Activated naive CD4-positive, alpha-beta T cell treated with anti-CD3 and anti-CD28 coated beads for 36 hours (primary cell): ENCODE measurements at regions of chr2 and their contacts with region 1.

Region 1: DNA sequence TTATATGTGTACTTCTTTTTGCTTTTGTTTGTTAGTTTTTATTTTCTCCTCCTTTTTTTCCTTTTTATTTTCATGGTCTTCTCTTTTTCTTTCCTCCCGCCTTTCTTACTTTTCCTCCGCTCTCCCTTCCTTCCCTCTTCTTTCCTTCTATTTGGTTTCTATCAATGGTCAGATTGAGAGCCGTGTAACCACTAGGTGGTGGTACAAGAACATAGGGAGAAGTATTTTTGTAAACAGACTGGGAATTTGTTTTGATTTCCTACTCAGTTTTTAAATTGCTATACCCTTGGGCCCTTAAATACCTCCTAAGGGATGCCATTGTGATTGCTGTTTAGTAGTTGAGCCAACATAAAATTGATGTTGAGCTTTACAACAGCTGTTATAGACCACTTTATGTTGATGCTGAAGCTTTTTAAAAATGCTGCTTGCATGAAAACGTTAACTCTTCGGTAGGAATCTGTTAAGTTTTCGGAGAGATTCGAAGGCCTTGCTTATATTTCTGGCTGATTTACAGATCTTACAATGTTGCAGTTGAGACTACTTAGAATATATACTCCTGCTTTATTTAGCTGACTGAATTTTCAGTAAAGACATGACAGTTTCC is 124.2 kb downstream of the UBE2E3 start:
- DNase-seq: peak; percentile 35
- H3K4me3 Mint-ChIP-seq: peak overlapping the region; percentile 20
- H3K27ac Mint-ChIP-seq: peak overlapping the region; percentile 29
- H3K4me1 Mint-ChIP-seq: peaks cover 41% of the 10 kb centered on the region
- H3K27me3 Mint-ChIP-seq: no peaks in the 10 kb centered on the region

Region 2: DNA sequence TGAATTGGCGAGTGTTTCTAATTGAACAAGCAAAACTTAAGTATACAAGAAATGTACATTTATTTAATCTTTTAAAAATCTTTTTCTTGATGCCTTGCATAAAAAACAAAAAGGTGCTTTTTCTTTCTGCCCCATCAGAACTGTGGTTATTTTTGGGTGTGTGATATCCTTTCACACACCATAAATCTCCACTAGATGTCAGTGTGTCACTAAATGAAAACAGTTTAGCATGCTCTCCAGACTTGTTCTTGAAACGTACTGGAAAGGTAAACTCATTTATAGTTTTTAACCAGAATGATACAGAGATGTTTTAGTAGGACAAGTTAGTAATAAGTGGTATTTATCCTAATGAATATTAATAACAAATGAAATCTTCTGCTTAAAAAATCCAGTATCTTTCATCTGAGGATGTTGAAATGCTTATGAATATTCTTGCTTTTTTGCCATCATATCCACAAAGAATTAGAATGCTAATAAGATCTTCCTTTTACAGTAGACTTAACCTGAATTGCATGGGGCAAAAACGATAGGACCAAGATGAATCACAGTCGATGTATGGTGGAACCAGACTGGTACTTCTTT is 27.4 kb before region 1 on chr2:
- CTCF ChIA-PET with region 1: interaction called, 4 read pairs
- intact Hi-C with region 1: loop called (anchors 1 kb)
- DNase-seq: peak; percentile 8
- H3K4me3 Mint-ChIP-seq: no peak overlapping the region
- H3K27ac Mint-ChIP-seq: no peak overlapping the region
- H3K4me1 Mint-ChIP-seq: peaks cover 6% of the 10 kb centered on the region
- H3K27me3 Mint-ChIP-seq: no peaks in the 10 kb centered on the region

Region 3: DNA sequence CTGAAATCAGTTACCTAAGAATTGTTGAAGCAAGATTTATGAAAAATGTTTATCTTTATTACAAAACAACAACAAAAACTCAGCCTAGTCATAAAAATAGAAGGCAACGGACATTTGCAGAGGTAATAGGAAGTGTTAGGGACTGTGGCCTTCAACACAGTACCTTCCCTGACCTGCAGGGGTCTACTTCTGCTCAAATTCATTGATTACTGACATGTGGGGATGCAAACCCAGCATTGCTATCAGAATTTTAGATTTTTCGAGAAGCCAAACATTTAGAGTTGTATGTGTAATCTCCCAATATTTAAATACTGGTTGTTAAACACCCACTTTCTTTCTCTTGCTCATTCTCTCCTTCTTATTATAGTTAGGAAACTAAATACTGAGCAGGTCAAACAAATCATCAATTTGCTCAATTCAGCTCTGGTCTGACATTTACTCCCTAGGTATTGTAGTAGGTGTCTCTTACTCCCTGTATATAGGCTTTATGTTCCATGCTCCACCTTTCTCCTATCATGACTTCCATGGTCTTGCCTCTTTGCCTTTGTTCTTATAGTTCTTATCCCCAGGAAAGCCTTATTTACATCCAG is 74.3 kb after region 1 on chr2:
- CTCF ChIA-PET with region 1: no interaction called
- intact Hi-C with region 1: loop called (anchors 1 kb)
- DNase-seq: peak; percentile 61
- H3K4me3 Mint-ChIP-seq: no peak overlapping the region
- H3K27ac Mint-ChIP-seq: peak overlapping the region; percentile 5
- H3K4me1 Mint-ChIP-seq: peaks cover 48% of the 10 kb centered on the region
- H3K27me3 Mint-ChIP-seq: no peaks in the 10 kb centered on the region

Region 4: GRCh38 chr2:181281206-181281832 is 176.7 kb after region 1 on chr2:
- CTCF ChIA-PET with region 1: no interaction called
- intact Hi-C with region 1: loop called (anchors 2 kb)
- DNase-seq: no peak
- H3K4me3 Mint-ChIP-seq: no peak overlapping the region
- H3K27ac Mint-ChIP-seq: peak overlapping the region; percentile 60
- H3K4me1 Mint-ChIP-seq: peaks cover 37% of the 10 kb centered on the region
- H3K27me3 Mint-ChIP-seq: no peaks in the 10 kb centered on the region

Region 5: DNA sequence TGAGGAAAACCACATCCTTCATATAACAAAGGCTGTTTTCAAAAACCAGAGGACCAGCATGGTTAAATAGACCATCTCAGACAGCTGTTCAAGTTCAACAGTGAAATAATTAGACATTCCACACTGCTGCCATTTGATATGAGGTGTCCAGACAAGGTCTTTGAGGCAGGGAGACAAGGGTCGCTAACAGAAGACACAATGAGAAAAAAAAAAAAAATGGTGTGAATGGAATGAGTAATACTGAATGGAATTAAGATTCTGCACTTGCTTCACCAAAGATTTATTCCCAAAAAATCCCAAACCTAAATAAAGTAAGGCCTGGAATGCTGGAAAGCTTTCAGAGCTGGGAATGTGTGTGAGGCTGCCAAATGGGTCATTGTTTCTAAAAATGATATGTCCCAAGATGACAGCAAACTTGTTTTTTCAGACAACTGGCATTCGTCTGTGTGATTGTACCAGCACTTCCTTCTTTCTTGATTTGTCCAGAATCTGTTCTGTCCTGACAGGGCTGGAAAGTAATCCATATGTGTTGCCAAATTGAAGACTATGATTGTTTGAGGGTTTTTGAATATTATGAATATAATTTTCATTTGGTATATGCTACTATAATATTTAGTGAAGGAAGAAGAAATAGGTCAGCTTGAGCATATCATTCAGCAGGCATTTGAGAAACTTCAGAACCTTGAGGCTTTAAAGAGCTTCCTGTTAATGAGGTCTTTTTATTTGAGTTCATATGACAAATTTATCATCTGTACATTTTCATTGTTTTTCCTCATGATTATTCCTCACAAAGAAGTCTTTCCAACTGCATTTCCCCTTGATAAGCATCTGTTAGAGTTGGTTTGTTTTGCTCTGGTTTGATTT is 267.4 kb after region 1 on chr2:
- CTCF ChIA-PET with region 1: no interaction called
- intact Hi-C with region 1: no loop called
- DNase-seq: no peak
- H3K4me3 Mint-ChIP-seq: no peak overlapping the region
- H3K27ac Mint-ChIP-seq: no peak overlapping the region
- H3K4me1 Mint-ChIP-seq: peaks cover 17% of the 10 kb centered on the region
- H3K27me3 Mint-ChIP-seq: no peaks in the 10 kb centered on the region

Region 6: DNA sequence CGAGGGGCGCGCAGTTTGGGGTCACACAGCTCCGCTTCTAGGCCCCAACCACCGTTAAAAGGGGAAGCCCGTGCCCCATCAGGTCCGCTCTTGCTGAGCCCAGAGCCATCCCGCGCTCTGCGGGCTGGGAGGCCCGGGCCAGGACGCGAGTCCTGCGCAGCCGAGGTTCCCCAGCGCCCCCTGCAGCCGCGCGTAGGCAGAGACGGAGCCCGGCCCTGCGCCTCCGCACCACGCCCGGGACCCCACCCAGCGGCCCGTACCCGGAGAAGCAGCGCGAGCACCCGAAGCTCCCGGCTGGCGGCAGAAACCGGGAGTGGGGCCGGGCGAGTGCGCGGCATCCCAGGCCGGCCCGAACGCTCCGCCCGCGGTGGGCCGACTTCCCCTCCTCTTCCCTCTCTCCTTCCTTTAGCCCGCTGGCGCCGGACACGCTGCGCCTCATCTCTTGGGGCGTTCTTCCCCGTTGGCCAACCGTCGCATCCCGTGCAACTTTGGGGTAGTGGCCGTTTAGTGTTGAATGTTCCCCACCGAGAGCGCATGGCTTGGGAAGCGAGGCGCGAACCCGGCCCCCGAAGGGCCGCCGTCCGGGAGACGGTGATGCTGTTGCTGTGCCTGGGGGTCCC is 352.6 kb after region 1 on chr2 and contains the start of gene ITGA4:
- CTCF ChIA-PET with region 1: interaction called, 71 read pairs
- intact Hi-C with region 1: loop called (anchors 1 kb)
- DNase-seq: peak; percentile 88
- H3K4me3 Mint-ChIP-seq: peak within 1 kb of the TSS; percentile 92
- H3K27ac Mint-ChIP-seq: peak within 1 kb of the TSS; percentile 93
- H3K4me1 Mint-ChIP-seq: peaks cover 39% of the 10 kb centered on the region
- H3K27me3 Mint-ChIP-seq: no peaks in the 10 kb centered on the region
- total RNA-seq, gene ITGA4: 26.6 to 27.8 TPM

Region 7: DNA sequence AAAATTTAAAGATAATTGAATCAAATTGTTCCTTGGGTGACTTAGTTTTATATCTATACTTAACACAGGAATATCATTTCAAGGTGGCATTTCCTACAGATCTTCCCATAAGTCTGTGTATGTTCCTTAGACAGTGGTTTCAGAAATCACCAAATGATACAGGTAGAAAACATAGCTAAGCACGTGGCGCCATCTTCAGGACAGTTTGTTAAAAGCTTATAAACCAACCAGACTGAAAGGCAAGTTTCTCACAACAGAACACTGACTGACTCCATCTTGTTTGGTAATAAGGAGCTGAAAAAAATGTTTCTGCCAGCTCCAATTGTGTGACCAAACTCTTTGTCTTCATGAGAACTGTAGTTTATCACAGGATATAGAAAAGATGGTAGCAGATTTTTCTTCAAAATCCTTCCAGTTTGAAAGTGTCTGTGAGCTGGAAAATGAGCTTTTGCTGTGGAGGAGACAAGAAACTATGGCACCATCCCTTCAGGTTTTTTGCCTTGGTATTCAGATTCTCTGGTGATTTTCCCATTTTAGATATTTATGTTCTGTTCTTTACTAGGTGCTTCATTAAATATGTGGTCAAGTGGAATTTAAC is 610.5 kb after region 1 on chr2:
- CTCF ChIA-PET with region 1: interaction called, 29 read pairs
- intact Hi-C with region 1: loop called (anchors 1 kb)
- DNase-seq: peak; percentile 89
- H3K4me3 Mint-ChIP-seq: no peak overlapping the region
- H3K27ac Mint-ChIP-seq: no peak overlapping the region
- H3K4me1 Mint-ChIP-seq: no peaks in the 10 kb centered on the region
- H3K27me3 Mint-ChIP-seq: no peaks in the 10 kb centered on the region

Region 8: GRCh38 chr2:181953881-181954537 is 849.4 kb after region 1 on chr2:
- CTCF ChIA-PET with region 1: no interaction called
- intact Hi-C with region 1: loop called (anchors 10 kb)
- DNase-seq: peak; percentile 82
- H3K4me3 Mint-ChIP-seq: peak overlapping the region; percentile 17
- H3K27ac Mint-ChIP-seq: no peak overlapping the region
- H3K4me1 Mint-ChIP-seq: peaks cover 9% of the 10 kb centered on the region
- H3K27me3 Mint-ChIP-seq: peaks cover 19% of the 10 kb centered on the region